Common myeloid progenitor, CD34-positive (primary cell): ENCODE measurements at regions of chr11 and their contacts with region 1.

Region 1: DNA sequence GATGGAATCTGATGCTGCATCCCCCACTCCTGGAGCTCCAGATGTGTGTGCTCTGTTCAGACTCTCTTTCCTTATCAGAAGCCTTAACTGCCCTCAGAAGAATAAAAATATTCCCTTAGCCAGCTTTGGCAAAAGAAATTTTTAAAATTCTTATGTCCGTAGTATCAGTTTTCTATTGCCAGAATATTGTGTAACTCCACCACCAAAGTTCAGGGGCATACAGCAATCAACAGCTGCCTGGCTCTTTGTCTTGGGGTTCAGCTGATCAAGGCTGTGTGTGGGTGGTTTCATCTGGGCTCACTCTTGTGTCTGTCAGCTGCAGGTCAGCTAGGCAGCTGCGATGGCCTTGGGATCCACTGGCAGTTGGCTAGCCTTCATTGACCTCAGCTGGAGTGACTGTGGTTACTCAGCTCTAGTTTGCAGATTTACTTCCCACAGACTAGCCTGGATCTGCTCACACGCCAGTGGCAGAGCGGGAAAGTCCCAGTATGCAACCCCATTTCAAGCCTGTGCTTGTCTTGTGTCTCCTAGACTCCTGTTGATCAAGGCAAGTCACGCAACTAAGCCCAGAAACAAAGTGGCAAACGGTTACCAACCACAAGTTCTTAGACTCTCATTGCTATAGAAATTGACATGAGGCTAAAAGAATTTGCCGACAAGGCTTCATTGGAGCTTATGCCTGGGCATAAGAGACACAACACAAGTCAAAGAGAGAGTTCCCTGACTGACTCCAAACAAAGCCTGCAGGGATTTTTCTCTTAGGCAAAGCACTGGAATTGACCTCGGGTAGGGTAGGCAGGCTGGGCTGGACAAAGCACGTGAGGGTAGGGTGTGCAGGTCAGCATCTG is 7.4 kb downstream of the TMEM138 start:
- DNase-seq: no peak
- H3K4me3 ChIP-seq: no peak overlapping the region
- H3K27ac ChIP-seq: no peak overlapping the region
- H3K4me1 ChIP-seq: no peaks in the 10 kb centered on the region
- H3K27me3 ChIP-seq: no peaks in the 10 kb centered on the region

Region 2: DNA sequence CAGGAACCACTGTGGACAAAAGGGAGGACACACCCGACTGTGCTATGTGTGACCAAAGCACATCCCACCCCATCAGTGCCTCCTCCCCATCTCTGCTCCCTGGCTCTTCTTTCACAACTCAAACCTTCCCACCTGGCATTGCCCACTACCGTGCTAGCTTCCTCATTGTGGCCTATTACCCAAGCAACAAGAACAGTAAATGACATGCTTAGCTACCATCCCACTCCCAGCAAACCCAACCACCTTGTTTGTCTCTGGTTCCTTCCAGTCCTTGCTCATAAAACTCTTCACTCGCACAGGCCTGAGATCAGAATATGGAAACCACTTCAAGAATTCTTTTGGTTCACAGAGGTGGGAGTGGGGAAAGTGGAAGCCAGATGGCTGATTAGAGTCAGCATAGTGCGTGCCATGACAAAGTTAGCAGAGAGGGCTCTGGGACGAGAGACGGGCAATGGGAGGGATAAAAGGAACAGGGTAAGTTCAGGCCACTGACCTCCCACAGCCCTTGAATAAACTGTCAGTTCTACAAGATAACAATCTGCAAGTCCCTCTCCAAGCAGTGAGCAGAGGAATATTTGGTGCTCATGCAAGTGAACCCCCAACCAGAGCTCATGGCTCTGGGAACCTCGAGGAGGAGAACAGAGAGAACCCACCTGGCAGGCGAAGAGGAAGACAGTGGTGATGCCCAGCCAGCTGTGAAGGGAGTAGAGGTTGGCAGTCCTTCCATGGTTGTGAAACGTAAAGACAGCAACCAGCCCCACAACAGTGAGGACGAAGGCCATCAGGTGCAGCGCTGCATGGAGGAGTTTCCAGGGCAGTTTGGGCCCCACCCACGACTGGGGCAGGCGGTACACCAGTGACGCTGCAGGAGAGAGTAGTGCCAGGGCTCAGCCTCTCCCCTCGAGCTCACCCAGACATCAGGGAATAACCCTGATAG is 16.2 kb before region 1 on chr11:
- CTCF ChIA-PET with region 1: interaction called, 15 read pairs
- POLR2A ChIA-PET with region 1: interaction called, 3 read pairs
- DNase-seq: no peak
- H3K4me3 ChIP-seq: no peak overlapping the region
- H3K27ac ChIP-seq: no peak overlapping the region
- H3K4me1 ChIP-seq: peaks cover 8 to 21% (median 17%) of the 10 kb centered on the region in 4 experiments
- H3K27me3 ChIP-seq: no peaks in the 10 kb centered on the region

Region 3: DNA sequence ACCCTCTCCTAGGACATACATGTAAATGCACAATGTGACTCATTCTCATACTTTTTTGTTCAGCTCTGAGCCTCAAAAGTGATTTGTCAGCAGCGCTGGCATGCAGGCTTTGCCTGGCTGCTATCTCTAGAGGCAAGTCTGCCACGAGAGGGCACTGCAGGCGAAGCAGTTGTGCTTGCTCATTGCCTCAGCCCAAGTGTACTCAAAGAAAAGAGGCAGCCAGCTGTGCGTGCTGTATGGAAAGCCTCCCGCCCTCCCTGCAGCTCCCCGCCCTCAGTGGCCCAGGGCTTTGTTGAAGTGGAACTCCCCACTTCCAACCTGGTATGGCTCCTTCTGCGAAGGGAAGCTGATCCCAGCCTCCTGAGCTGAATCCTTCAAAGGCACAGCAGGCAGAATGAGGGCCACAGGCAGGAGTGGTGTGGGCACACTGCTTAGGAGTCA is 76.6 kb after region 1 on chr11:
- CTCF ChIA-PET with region 1: no interaction called
- POLR2A ChIA-PET with region 1: no interaction called
- DNase-seq: peak; percentile 85 to 92 (median 88)
- H3K4me3 ChIP-seq: no peak overlapping the region
- H3K27ac ChIP-seq: no peak overlapping the region
- H3K4me1 ChIP-seq: peaks cover 0 to 4% (median 2%) of the 10 kb centered on the region in 4 experiments
- H3K27me3 ChIP-seq: no peaks in the 10 kb centered on the region